ENCODE measurements at regions of chr14 and their contacts with region 1.

Region 1: DNA sequence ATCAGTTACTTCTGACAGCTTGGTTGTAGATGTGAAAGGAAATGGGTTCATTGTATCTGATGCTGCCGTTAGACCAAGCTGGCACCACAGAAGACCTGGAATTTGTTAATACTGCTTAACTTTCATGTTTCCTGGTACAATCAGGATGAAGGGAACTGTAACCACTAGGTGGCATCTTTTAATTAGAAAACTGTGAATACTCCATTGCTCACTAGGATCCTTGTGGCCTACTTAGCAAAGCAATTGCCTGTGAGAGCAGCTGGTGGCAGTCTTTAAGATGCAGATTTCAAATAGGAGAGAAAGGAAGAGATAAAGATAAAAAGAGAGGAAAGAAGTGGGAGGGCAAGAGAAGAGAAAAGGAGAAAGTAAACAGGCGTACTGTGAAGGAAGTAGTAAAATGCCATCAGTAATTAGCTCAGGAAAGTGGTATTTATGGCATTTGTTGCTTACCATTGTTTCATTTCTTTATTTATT is 114.5 kb downstream of the RAD51B start:
- DNase-seq: peak; percentile 88
- ATAC-seq: peak; percentile 99
- H3K4me3 ChIP-seq: no peak overlapping the region
- H3K27ac ChIP-seq: no peak overlapping the region
- H3K4me1 ChIP-seq: no peaks in the 10 kb centered on the region
- H3K27me3 ChIP-seq: no peaks in the 10 kb centered on the region
- CTCF ChIP-seq: peak; percentile 96

Region 2: DNA sequence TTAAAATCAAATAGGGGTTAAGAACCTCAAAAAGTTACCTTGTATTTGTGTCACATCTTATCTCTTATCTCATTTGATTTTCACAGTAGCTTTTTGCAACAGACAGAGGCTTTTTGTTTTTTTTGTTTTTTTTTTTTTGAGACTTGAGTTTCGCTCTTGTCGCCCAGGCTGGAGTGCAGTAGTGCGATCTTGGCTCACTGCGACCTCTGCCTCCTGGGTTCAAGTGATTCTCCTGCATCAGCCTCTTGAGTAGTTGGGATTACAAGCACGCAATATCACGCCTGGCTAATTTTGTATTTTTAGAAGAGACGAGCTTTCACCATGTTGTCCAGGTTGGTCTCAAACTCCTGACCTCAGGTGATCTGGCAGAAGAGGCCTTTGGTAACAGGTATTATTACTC is 206.7 kb before region 1 on chr14:
- CTCF ChIA-PET with region 1: interaction called, 16 read pairs
- POLR2A ChIA-PET with region 1: no interaction called
- intact Hi-C with region 1: no loop called
- DNase-seq: no peak
- ATAC-seq: no peak
- H3K4me3 ChIP-seq: no peak overlapping the region
- H3K27ac ChIP-seq: no peak overlapping the region
- H3K4me1 ChIP-seq: no peaks in the 10 kb centered on the region
- H3K27me3 ChIP-seq: no peaks in the 10 kb centered on the region
- CTCF ChIP-seq: no peak

Region 3: DNA sequence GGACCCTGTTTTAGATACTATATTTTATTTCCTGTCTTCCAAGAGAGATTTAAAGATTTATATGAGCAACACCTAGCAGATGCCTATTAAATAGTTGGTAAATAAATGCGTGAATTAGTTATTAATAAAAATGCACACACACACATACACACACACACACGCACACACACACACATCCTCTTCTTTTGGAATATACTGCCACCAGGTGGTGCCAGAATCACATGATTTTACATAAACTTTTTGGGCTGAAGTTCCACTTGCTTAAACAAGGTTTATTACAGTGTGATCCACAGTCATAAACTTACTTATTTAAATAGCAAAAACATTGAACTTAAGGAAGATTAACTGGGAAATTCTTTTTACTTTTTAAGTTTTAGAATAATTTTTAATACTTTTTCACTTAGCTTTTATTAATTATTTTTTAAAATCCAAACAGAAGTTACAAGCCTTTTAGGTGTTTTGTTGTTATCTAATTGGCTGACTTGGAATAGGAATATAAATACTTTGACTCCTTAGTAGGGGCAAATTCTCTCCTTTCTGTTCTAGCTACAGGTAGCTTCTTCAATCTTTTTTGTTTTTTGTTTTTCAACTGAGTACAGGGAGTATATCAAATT is 96.9 kb before region 1 on chr14:
- CTCF ChIA-PET with region 1: no interaction called
- POLR2A ChIA-PET with region 1: no interaction called
- intact Hi-C with region 1: loop called (anchors 2 kb)
- DNase-seq: peak; percentile 86
- ATAC-seq: peak; percentile 82
- H3K4me3 ChIP-seq: no peak overlapping the region
- H3K27ac ChIP-seq: no peak overlapping the region
- H3K4me1 ChIP-seq: peaks cover 7% of the 10 kb centered on the region; the same call in 1 of the 2 replicates
- H3K27me3 ChIP-seq: no peaks in the 10 kb centered on the region
- CTCF ChIP-seq: peak; percentile 93

Region 4: DNA sequence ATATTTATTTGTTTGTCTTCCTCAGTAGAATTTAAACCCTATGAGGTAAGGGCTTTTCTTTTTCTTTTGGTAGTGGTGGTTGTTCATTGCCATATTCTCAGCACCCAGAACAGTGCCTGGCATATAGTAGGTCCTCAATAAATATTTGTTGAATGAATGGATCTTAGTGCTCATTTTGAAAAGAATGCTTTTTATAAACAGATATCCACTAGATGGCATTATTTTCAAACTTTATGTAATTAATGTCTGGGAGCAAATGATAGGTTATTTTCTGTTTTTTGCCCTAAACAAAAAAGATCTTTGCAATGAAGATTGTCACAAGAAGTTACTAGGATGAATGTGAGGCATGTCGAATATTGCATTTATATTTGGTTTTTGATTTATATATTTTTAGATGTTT is 50.3 kb before region 1 on chr14:
- CTCF ChIA-PET with region 1: no interaction called
- POLR2A ChIA-PET with region 1: no interaction called
- intact Hi-C with region 1: loop called (anchors 2 kb)
- DNase-seq: peak; percentile 62
- ATAC-seq: peak; percentile 50; the same call in 1 of the 2 replicates
- H3K4me3 ChIP-seq: no peak overlapping the region
- H3K27ac ChIP-seq: no peak overlapping the region
- H3K4me1 ChIP-seq: no peaks in the 10 kb centered on the region
- H3K27me3 ChIP-seq: no peaks in the 10 kb centered on the region
- CTCF ChIP-seq: peak; percentile 63

Region 5: DNA sequence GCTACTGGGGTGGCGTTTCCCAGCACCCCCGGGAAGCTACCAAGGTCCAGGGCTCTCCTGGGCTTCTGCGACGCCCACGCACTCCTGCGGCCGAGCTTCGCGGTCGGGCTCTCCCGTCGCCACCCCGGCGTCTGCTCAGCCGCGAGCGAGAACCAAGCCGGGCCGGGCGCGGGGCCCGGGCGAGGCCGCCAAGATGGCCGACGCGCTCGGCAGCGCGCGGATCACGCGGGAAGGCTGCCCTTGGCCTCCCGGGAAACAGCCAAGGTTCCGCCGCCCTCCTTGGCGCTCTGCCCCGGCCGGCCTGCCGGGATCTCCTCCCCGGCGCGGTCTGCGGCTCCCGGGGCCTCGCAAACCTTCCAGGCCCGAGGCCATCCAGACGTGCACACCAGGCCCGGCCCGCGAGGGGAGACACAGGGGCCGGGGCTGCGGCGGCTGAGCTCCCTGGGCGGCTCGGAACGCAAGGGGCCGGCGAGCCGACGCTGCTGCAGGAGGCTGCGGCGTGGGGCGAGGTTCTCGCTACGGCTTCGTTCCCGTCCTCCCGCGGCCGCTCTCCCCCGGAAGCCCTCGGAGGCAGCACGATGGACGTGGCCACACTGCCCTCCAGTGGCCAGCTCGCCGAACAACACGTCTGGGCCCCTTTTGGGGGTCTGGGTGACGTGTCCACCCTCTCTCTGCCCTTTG is 882.4 kb after region 1 on chr14:
- CTCF ChIA-PET with region 1: interaction called, 7 read pairs
- POLR2A ChIA-PET with region 1: no interaction called
- intact Hi-C with region 1: loop called (anchors 2 kb)
- DNase-seq: peak; percentile 92
- ATAC-seq: peak; percentile 90
- H3K4me3 ChIP-seq: peak overlapping the region; percentile 60
- H3K27ac ChIP-seq: peak overlapping the region; percentile 83
- H3K4me1 ChIP-seq: peaks cover 22% of the 10 kb centered on the region
- H3K27me3 ChIP-seq: no peaks in the 10 kb centered on the region
- CTCF ChIP-seq: peak; percentile 97

Region 6: GRCh38 chr14:68843471-68844209 is 909.6 kb after region 1 on chr14:
- CTCF ChIA-PET with region 1: interaction called, 5 read pairs
- POLR2A ChIA-PET with region 1: no interaction called
- intact Hi-C with region 1: loop called (anchors 2 kb)
- DNase-seq: peak; percentile 80
- ATAC-seq: peak; percentile 87
- H3K4me3 ChIP-seq: peak overlapping the region; percentile 48; the same call in 1 of the 2 replicates
- H3K27ac ChIP-seq: no peak overlapping the region
- H3K4me1 ChIP-seq: peaks cover 14% of the 10 kb centered on the region
- H3K27me3 ChIP-seq: no peaks in the 10 kb centered on the region
- CTCF ChIP-seq: peak; percentile 98